Activated CD4-positive, alpha-beta memory T cell treated with anti-CD3 and anti-CD28 coated beads for 36 hours (primary cell): ENCODE measurements at regions of chr19 and their contacts with region 1.

Region 1: DNA sequence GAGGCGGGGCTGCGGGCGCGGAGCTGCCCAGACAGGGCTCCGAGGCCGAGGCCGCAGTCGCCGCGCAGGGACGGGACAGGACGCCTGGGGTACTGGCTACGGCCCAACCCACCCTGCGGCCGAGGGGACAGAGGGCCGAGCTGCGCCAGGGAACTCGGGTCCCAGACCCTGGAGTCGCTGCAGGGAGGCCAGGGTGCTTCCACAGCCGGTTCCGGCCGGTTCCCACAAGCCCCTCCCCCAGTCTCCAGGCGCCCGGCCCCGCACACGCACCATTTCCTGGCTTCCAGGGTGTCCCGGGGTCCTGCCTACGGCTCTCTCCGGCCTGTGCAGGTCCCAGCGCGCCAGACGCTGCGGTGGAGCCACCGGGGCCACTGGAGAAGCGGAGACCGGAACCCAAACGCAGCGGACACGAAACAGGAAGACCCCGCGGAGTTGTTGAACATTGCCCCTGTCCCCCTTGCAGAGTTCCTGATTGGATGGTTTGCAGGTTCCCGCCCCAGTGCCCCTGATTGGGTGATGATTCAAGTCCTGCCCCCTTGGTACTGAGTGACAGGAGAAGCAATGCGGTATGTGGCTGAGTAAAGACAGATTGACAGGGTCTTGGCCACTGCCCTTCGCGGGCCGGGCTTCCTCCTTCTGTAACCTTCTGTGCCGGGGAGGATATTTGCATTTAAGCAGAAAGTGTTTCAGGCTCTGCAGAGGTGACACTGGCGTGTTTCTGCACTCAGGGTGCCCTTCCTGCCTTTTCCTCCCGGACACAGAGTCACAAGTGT is at the start of gene ZNF564:
- DNase-seq: peak; percentile 95
- H3K4me3 Mint-ChIP-seq: peak within 1 kb of the TSS; percentile 94
- H3K27ac Mint-ChIP-seq: peak within 1 kb of the TSS; percentile 90
- H3K4me1 Mint-ChIP-seq: peaks cover 35% of the 10 kb centered on the region
- H3K27me3 Mint-ChIP-seq: no peaks in the 10 kb centered on the region
- total RNA-seq, gene ZNF564: 6.5 to 7.0 TPM

Region 2: DNA sequence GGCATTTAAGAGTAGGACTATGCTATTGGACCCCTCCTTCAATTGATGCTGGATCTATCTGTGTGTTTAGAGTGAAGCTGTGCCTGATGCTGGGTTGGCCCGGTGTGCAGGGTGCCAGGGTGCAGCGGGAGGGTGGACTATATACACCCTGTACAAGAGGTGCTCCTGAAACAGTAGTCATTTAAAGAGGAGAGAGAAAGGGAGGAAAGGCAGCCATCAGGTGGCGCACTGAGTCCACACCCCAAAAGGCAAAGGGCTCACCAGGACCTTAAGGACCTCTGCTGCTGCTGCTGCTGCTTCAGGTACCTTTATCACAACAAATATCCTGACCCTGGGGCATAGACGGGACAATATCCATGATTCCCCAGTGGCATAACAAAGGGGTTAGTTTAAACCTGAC is 349.0 kb before region 1 on chr19:
- CTCF ChIA-PET with region 1: no interaction called
- POLR2A ChIA-PET with region 1: no interaction called
- intact Hi-C with region 1: loop called (anchors 5 kb)
- DNase-seq: peak; percentile 78
- H3K4me3 Mint-ChIP-seq: no peak overlapping the region
- H3K27ac Mint-ChIP-seq: no peak overlapping the region
- H3K4me1 Mint-ChIP-seq: peaks cover 5% of the 10 kb centered on the region
- H3K27me3 Mint-ChIP-seq: no peaks in the 10 kb centered on the region

Region 3: GRCh38 chr19:12425236-12425887 is 125.9 kb before region 1 on chr19:
- CTCF ChIA-PET with region 1: no interaction called
- POLR2A ChIA-PET with region 1: no interaction called
- intact Hi-C with region 1: no loop called
- DNase-seq: no peak
- H3K4me3 Mint-ChIP-seq: no peak overlapping the region
- H3K27ac Mint-ChIP-seq: no peak overlapping the region
- H3K4me1 Mint-ChIP-seq: no peaks in the 10 kb centered on the region
- H3K27me3 Mint-ChIP-seq: no peaks in the 10 kb centered on the region

Region 4: DNA sequence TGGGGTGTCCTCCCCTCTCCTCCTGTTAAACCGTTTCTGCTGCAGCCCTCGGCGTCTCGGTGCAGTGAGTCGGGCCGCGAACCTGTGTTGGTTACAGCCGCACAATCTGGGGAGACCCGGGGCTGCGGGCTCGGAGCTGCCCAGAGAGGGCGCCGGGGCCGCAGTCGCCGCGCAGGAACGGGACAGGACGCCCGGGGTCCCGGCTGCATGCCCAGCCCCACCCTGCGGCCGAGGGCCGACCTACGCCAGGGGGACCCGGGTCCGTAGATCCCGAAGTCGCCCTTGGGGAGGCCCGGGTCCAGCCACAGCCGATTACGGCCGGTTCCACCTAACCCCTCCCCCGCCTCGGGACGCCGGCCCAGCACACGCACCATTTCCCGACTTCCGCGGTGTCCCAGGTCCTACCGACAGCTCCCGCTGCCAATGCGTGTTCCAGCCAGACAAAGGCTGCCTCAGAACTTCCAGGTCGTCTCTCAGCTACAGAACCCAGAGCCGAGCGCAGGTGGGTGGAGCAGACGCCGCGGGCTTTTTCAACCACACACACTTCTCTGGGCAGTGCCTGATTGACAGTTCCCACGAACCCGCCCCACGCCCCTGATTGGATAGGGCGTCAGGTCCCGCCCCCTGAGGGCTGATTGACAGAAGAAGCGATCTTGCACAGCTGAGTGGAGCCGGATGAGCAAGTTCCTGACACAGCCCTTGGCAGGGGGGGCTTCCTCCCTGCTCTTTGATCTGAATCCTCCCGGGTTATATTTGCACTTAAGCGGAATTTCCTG is 110.5 kb before region 1 on chr19 and contains the start of gene ZNF443:
- CTCF ChIA-PET with region 1: no interaction called
- POLR2A ChIA-PET with region 1: no interaction called
- intact Hi-C with region 1: loop called (anchors 2 kb)
- DNase-seq: peak; percentile 100
- H3K4me3 Mint-ChIP-seq: peak within 1 kb of the TSS; percentile 97
- H3K27ac Mint-ChIP-seq: peak within 1 kb of the TSS; percentile 92
- H3K4me1 Mint-ChIP-seq: peaks cover 11% of the 10 kb centered on the region
- H3K27me3 Mint-ChIP-seq: no peaks in the 10 kb centered on the region
- total RNA-seq, gene ZNF443: 5.1 to 5.3 TPM

Region 5: DNA sequence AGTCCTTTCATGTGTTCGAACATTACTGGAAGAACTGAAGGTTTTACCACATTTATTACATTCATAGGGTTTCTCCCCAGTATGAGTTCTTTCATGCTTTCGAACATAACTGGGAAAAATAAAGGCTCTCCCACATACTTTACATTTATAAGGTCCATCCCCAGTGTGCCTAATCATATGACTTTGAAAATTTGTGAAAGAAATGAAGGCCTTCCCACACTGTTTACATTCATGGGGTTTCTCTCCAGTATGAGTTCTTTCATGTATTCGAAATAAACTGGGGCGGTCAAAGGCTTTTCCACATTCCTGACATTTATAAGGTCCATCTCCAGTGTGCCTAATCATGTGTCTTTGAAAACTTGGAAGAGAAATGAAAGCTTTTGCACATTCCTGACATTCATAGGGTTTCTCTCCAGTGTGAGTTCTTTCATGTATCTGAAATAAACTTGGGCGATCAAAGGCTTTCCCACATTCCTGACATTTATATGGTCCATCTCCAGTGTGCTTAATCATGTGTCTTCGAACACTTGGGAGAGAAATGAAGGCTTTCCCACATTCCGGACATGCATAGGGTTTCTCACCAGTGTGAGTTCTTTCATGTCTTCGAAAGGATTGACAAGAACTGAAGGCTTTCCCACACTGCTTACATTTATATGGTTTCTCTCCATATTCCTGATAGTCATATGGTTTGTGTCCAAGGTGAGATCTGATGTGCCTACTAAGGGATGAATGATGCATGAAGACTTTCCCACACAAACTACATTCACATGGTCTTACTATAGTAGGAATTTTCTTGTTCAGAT is 24.0 kb before region 1 on chr19:
- CTCF ChIA-PET with region 1: no interaction called
- POLR2A ChIA-PET with region 1: no interaction called
- intact Hi-C with region 1: no loop called
- DNase-seq: no peak
- H3K4me3 Mint-ChIP-seq: no peak overlapping the region
- H3K27ac Mint-ChIP-seq: peak overlapping the region; percentile 13
- H3K4me1 Mint-ChIP-seq: no peaks in the 10 kb centered on the region
- H3K27me3 Mint-ChIP-seq: no peaks in the 10 kb centered on the region

Region 6: GRCh38 chr19:12564016-12564664 is 12.9 kb after region 1 on chr19:
- CTCF ChIA-PET with region 1: interaction called, 20 read pairs
- POLR2A ChIA-PET with region 1: no interaction called
- intact Hi-C with region 1: no loop called
- DNase-seq: peak; percentile 95
- H3K4me3 Mint-ChIP-seq: no peak overlapping the region
- H3K27ac Mint-ChIP-seq: peak overlapping the region; percentile 19
- H3K4me1 Mint-ChIP-seq: peaks cover 5% of the 10 kb centered on the region
- H3K27me3 Mint-ChIP-seq: no peaks in the 10 kb centered on the region

Region 7: DNA sequence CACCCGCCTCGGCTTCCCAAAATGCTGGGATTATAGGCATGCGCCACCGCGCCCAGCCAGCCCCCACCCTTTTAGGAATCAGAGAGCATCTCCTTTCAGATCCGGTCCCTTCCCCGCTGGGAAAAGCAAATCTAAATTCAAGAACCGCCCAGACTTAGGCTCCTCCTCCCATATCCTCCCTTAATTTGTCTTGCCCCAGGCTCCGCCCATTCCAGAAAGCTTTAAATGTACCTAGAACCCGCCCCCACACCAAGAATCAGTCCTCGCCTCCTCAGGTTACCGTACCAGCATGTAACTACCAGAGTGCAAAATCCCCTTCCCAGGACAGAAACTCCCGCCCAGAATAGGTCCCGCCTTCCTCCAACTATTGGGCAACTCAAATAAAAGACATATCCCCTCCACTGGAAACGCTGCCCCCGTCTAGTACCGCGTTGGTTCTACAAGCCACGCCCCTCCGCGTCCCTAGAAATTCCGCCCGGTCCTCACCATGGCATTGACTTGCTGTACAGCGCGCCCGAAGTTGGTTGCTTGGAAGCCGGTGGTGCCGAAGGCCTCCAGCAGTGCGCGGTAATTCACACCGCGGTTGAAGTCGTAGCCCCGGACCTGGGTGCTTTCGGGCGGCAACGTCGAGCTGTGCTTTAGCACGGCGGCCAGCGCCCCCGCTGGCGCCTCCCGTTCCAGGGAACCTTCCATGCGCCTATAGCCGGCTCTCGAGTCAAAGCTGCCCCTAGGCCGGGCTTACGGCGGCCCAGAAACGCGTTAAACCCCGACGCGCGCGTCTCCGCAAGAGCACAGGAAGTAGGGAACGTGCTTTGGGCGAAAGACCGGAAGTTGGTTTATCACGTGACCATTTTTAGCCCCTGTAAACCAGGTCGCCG is 130.1 kb after region 1 on chr19 and contains the start of gene DHPS:
- CTCF ChIA-PET with region 1: no interaction called
- POLR2A ChIA-PET with region 1: no interaction called
- intact Hi-C with region 1: loop called (anchors 1 kb)
- DNase-seq: peak; percentile 95
- H3K4me3 Mint-ChIP-seq: peak within 1 kb of the TSS; percentile 95
- H3K27ac Mint-ChIP-seq: peak within 1 kb of the TSS; percentile 94
- H3K4me1 Mint-ChIP-seq: peaks cover 22% of the 10 kb centered on the region
- H3K27me3 Mint-ChIP-seq: no peaks in the 10 kb centered on the region
- total RNA-seq, gene DHPS: 126 to 127 TPM

Region 8: GRCh38 chr19:12749938-12750521 is 198.8 kb after region 1 on chr19:
- CTCF ChIA-PET with region 1: no interaction called
- POLR2A ChIA-PET with region 1: no interaction called
- intact Hi-C with region 1: no loop called
- DNase-seq: no peak
- H3K4me3 Mint-ChIP-seq: no peak overlapping the region
- H3K27ac Mint-ChIP-seq: no peak overlapping the region
- H3K4me1 Mint-ChIP-seq: peaks cover 4% of the 10 kb centered on the region
- H3K27me3 Mint-ChIP-seq: peaks cover 7% of the 10 kb centered on the region

Region 9: GRCh38 chr19:12890787-12891552 is 339.7 kb after region 1 on chr19 and contains the start of gene GCDH:
- CTCF ChIA-PET with region 1: no interaction called
- POLR2A ChIA-PET with region 1: no interaction called
- intact Hi-C with region 1: no loop called
- DNase-seq: peak; percentile 98
- H3K4me3 Mint-ChIP-seq: peak within 1 kb of the TSS; percentile 99
- H3K27ac Mint-ChIP-seq: peak within 1 kb of the TSS; percentile 81
- H3K4me1 Mint-ChIP-seq: peaks cover 29% of the 10 kb centered on the region
- H3K27me3 Mint-ChIP-seq: no peaks in the 10 kb centered on the region
- total RNA-seq, gene GCDH: 33.6 to 34.4 TPM